Dorsolateral prefrontal cortex (tissue), 120 donors: ENCODE measurements at regions of chr11 and their contacts with region 1.

Region 1: GRCh38 chr11:58654079-58654907 is 31.8 kb downstream of the CNTF start:
- DNase-seq: peak; percentile 44 to 86 (median 76)
- H3K4me3 ChIP-seq: no peak overlapping the region
- H3K27ac ChIP-seq: no peak overlapping the region
- H3K27me3 ChIP-seq: peaks cover 0 to 6% (median 0%) of the 10 kb centered on the region in 45 donors
- CTCF ChIP-seq: peak; percentile 76 to 95 (median 91)

Region 2: DNA sequence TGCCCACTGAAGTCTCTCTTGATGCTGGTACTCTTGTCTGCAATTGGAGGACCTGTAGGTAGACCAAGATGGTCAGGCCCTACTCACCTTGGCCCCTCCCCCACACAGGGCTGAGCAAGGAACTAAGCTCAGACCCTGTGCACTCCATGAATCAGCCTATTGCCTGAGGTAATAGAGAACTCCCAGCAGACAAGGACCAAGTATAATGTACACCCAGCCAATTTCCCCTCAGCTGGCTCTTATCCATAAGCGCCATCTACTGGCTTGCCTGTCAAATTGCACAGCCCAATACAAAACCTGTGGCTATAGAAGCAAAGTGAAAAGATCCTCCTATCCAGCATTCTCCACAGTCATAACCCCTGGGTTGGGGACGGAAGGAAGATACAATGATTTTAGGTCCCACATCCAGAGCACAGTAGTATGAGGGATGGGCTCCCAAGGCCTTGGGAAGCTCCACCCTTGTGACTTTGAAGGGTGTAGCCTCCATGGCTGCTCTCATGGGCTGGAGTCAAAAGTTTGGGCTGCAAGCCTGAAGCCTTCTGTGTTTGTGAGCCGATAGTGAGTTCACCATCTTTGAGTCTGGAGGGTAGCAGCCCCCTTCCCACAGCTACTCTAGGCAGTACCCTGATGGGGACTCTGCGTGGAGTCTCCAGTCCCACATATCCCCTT is 134.2 kb after region 1 on chr11:
- intact Hi-C with region 1: loop called in 1 of 2 experiments (anchors 10 kb)
- DNase-seq: peak in 4 of 10 donors; percentile 19 to 58 (median 38)
- H3K4me3 ChIP-seq: no peak overlapping the region
- H3K27ac ChIP-seq: no peak overlapping the region
- H3K27me3 ChIP-seq: peaks cover 0 to 7% (median 0%) of the 10 kb centered on the region in 45 donors
- CTCF ChIP-seq: peak in 54 of 56 donors; percentile 29 to 77 (median 64)

Region 3: DNA sequence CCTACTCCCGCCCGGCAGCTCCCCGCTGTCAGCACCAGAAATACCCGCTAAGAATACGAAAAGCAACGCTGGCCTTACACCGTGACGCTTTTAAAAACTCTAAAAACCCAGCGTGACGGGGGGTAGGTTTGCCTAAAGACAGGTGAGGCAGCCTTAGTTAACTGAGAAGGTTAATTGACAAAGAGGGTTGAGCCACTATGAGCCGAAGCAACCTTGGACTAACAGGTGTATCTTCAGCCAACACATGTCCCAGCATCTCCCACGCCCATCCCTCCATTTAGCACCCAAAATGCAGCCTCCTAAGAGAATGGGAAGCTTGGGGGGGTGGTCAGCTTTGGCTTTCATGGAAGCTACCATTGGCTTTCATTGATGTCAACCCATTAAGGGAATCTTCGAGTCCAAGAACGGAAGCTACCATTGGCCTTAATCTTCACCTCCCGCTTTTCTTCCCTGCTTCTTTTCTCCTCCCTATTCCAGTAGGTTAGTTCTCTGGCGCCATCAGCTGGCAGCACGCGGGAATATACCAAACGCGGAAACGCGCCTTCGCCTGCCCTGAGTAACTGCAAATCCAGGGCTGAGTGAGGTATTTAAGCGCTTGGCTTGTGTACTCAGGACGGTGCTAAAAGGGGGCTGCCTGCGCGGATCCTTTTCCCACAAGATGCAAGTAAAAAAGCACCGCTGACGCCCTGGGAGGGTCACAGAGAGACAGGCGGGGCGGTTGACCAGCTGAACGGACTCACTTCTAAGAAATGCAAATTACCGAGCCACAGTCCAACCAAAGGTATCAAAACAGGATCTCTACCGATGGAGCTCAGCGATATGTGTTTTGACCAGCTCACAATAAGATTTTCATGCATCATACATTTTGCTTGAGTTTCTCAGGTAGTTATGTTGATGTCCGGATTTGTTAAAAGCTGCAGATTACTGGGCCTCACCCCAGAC is 246.5 kb after region 1 on chr11:
- intact Hi-C with region 1: loop called in 1 of 2 experiments (anchors 10 kb)
- DNase-seq: peak; percentile 17 to 87 (median 72)
- H3K4me3 ChIP-seq: peak overlapping the region in 47 of 59 donors; percentile 8 to 61 (median 41)
- H3K27ac ChIP-seq: no peak overlapping the region
- H3K27me3 ChIP-seq: peaks cover 0 to 7% (median 0%) of the 10 kb centered on the region in 45 donors
- CTCF ChIP-seq: peak in 55 of 56 donors; percentile 29 to 66 (median 54)